Activated T-helper 1 cell treated with anti-CD3 and anti-CD28 coated beads, Interleukin-12 subunit alpha, Interleukin-12 subunit beta, Interleukin-2, Interleukin-4 antibody, amounts not matched to agents 30 ng/mL and 10 ng/mL and 1 ng/mL, durations not matched to agents 14 hours and 24 hours and 36 hours (primary cell): ENCODE measurements at regions of chr2 and their contacts with region 1.

Region 1: DNA sequence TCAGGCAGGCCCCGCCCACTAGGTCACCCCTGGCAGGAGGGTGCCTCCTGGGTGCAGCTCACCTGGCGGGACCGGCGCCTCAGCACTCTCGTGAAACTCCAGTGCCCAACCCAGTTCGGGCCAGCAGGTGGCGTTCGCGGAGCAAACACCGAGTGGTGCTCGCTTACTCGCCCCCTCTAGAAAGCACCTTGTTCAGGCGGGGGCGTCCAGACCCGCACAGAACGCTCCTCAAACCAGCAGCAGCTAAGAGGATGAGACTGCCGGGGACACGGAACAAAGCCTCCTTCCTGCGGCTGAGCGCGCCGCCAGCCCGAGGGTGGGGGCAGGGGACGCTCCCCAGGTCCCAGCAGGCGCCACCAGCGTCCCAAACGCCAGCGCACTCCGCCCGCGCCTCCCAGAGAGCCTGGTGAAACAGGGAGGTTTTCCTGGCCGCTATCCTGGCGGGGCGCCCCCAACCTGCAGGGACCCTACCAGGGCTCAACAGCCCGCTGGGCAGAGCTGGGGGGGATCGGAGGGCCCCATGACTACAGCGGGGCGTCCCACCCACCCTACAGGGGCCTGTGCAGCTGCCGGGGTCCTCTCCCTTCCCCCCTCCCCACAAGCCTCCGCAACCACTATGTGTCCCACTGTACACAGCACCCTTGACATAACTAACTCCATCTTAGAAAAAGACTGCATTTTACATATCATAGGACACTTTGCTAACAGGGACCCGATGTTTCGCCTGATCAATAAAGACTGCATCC is 44.7 kb downstream of the MRPS5 start:
- DNase-seq: peak; percentile 89
- H3K4me3 Mint-ChIP-seq: peak overlapping the region; percentile 90
- H3K27ac Mint-ChIP-seq: peak overlapping the region; percentile 99
- H3K4me1 Mint-ChIP-seq: peaks cover 76% of the 10 kb centered on the region
- H3K27me3 Mint-ChIP-seq: no peaks in the 10 kb centered on the region

Region 2: GRCh38 chr2:94986392-94986963 is 90.5 kb before region 1 on chr2:
- intact Hi-C with region 1: loop called (anchors 1 kb)
- DNase-seq: peak; percentile 9
- H3K4me3 Mint-ChIP-seq: no peak overlapping the region
- H3K27ac Mint-ChIP-seq: no peak overlapping the region
- H3K4me1 Mint-ChIP-seq: no peaks in the 10 kb centered on the region
- H3K27me3 Mint-ChIP-seq: peaks cover 10% of the 10 kb centered on the region

Region 3: DNA sequence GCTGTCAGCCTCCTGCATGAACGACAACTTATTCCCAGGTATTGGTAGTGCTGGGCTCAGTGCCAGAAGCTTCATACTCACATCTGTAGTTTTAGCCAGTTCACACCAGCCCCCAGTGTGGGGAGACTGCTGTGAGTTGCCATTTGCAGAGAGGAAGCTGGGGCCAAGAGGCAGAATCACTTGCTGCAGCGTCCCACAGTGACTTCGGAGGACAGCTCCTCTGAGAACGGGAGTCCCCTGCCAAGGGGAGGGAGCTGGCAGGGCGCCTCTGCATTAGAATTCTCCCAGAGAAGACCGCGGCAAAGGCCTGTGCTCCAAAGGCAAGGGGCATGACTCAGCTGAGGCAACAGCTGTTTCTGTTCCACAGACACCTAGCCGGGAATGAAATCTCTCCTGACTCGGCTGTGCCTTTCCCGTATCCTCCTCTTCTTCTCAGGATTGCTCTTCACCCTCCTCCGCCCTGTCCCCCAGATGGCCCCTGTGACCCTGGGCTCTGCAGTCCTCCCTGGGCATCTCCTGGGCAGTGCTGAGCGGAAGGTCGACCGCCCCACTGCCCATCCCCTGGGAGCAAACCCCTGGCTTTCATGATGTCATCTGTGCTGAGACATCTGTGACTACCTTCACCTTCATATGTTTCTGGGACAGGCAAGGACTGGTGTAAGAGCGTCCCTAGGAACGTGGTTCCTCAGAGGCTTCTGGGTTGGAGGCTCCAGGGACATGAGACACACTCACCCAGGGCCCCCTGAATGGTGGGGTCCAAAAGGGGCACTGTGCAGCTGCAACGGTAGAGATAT is 33.5 kb before region 1 on chr2:
- intact Hi-C with region 1: loop called (anchors 1 kb)
- DNase-seq: no peak
- H3K4me3 Mint-ChIP-seq: peak overlapping the region; percentile 30
- H3K27ac Mint-ChIP-seq: peak overlapping the region; percentile 85
- H3K4me1 Mint-ChIP-seq: peaks cover 83% of the 10 kb centered on the region
- H3K27me3 Mint-ChIP-seq: no peaks in the 10 kb centered on the region

Region 4: GRCh38 chr2:95062242-95063085 is 14.5 kb before region 1 on chr2:
- intact Hi-C with region 1: loop called (anchors 1 kb)
- DNase-seq: no peak
- H3K4me3 Mint-ChIP-seq: peak overlapping the region; percentile 38
- H3K27ac Mint-ChIP-seq: peak overlapping the region; percentile 88
- H3K4me1 Mint-ChIP-seq: peaks cover 43% of the 10 kb centered on the region
- H3K27me3 Mint-ChIP-seq: no peaks in the 10 kb centered on the region

Region 5: DNA sequence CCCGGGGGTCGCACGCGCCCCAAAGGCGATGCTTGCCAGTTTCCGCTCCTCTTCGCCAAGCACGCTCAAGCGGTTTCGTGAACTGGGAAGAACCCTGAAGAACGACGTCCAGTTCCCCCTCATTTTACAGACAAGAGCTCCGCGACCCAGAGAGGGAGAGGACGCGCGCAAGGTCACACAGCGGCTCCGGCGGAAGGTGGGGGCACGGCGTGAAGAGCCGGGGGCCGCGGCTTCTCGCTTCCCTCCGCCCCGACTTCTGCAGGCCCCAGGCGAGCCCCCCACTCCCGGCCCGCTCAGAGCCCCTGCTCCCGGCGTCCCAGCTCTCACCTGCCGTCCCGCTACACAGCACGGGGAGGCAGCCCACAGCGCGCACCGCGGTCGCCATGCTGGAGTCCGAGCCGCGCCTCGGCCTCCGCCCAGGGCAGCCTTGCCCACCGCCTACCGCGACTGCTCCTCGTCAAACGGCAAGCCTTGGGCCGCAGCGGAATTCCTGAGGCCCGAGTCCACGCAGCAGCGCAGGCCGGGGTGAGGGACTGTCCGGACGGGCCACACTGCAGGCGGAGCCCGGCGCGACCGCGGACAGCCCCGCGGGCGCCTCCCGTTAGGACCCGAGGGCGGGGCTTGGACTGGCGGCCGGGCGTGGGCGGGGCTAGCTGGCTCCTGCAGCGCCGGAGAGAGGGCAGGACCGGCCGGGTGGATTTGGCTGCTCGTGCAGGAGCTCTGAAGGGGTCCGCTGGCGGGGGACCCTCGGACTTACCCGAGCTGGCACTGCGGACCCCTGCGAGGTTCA is 44.6 kb after region 1 on chr2 and contains the start of gene MRPS5:
- intact Hi-C with region 1: loop called (anchors 1 kb)
- DNase-seq: peak; percentile 84
- H3K4me3 Mint-ChIP-seq: peak within 1 kb of the TSS; percentile 97
- H3K27ac Mint-ChIP-seq: peak within 1 kb of the TSS; percentile 95
- H3K4me1 Mint-ChIP-seq: peaks cover 46% of the 10 kb centered on the region
- H3K27me3 Mint-ChIP-seq: peaks cover 2% of the 10 kb centered on the region
- total RNA-seq, gene MRPS5: 89.6 and 93.6 TPM in 2 replicates

Region 6: GRCh38 chr2:95149397-95149984 is 72.5 kb after region 1 on chr2:
- intact Hi-C with region 1: no loop called
- DNase-seq: no peak
- H3K4me3 Mint-ChIP-seq: no peak overlapping the region
- H3K27ac Mint-ChIP-seq: no peak overlapping the region
- H3K4me1 Mint-ChIP-seq: no peaks in the 10 kb centered on the region
- H3K27me3 Mint-ChIP-seq: no peaks in the 10 kb centered on the region

Region 7: DNA sequence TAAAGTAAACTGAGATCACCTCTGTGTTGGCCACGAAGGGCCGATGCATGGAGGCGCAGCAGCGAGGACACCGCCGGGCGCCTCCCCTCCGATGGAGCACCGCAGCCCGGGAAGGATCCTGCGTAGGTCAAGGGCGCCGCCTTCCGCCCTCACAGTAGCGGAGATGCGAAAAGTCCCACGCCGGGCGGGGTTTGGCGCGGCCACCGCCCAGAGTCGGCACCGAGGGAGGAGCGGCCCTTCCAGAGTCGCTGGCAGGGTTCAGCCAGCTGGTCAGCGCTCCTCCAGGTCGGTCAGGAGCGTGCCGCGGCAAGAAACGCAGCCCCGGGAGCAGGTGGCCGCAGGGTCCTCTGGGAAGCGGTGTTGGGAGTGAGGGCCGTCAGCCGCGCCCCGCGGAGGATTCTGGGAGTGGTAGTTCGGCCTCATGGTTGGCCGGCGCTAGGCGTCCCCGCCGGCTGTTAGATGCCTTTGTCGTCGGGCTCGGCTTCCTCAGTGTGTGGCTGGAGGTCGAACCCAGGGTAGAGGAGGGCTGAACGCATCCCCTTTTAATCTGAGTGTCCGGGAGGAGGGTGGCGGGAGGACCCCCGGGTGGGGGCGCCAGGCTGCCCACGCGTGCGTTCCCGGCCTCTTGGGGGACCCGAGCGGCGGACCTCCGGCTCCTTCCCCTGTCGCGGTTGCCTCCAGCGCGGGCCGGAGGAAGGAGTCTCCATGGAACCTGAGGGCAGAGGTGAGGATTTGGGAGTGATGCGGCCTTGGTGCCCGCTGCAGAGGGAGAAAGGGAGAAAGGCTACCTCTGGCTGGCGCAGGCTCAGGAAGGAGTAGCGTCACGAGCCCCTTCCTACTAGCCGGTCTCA is 130.4 kb after region 1 on chr2 and contains the start of gene ZNF892:
- intact Hi-C with region 1: loop called (anchors 1 kb)
- DNase-seq: peak; percentile 74
- H3K4me3 Mint-ChIP-seq: peak within 1 kb of the TSS; percentile 90
- H3K27ac Mint-ChIP-seq: peak within 1 kb of the TSS; percentile 54
- H3K4me1 Mint-ChIP-seq: peaks cover 30% of the 10 kb centered on the region
- H3K27me3 Mint-ChIP-seq: no peaks in the 10 kb centered on the region
- total RNA-seq, gene ZNF892: 4.7 and 5.9 TPM in 2 replicates

Region 8: GRCh38 chr2:95231723-95232122 is 154.8 kb after region 1 on chr2:
- intact Hi-C with region 1: no loop called
- DNase-seq: no peak
- H3K4me3 Mint-ChIP-seq: no peak overlapping the region
- H3K27ac Mint-ChIP-seq: no peak overlapping the region
- H3K4me1 Mint-ChIP-seq: no peaks in the 10 kb centered on the region
- H3K27me3 Mint-ChIP-seq: no peaks in the 10 kb centered on the region